Activated T-helper 1 cell treated with anti-CD3 and anti-CD28 coated beads, Interleukin-12 subunit alpha, Interleukin-12 subunit beta, Interleukin-2, Interleukin-4 antibody, amounts not matched to agents 30 ng/mL and 10 ng/mL and 1 ng/mL, durations not matched to agents 14 hours and 24 hours and 36 hours (primary cell): ENCODE measurements at regions of chr15 and their contacts with region 1.

Region 1: GRCh38 chr15:74460871-74461846 is at the start of gene UBL7:
- DNase-seq: peak; percentile 96
- H3K4me3 Mint-ChIP-seq: peak within 1 kb of the TSS; percentile 97
- H3K27ac Mint-ChIP-seq: peak within 1 kb of the TSS; percentile 94
- H3K4me1 Mint-ChIP-seq: peaks cover 56% of the 10 kb centered on the region
- H3K27me3 Mint-ChIP-seq: no peaks in the 10 kb centered on the region
- total RNA-seq, gene UBL7: 55.4 and 56.0 TPM in 2 replicates

Region 2: GRCh38 chr15:73991726-73992593 is 469.2 kb before region 1 on chr15 and contains the start of gene STOML1:
- intact Hi-C with region 1: loop called (anchors 2 kb)
- DNase-seq: peak; percentile 96
- H3K4me3 Mint-ChIP-seq: peak within 1 kb of the TSS; percentile 89
- H3K27ac Mint-ChIP-seq: peak within 1 kb of the TSS; percentile 85
- H3K4me1 Mint-ChIP-seq: peaks cover 49% of the 10 kb centered on the region
- H3K27me3 Mint-ChIP-seq: no peaks in the 10 kb centered on the region
- total RNA-seq, gene STOML1: 10.6 and 11.6 TPM in 2 replicates

Region 3: DNA sequence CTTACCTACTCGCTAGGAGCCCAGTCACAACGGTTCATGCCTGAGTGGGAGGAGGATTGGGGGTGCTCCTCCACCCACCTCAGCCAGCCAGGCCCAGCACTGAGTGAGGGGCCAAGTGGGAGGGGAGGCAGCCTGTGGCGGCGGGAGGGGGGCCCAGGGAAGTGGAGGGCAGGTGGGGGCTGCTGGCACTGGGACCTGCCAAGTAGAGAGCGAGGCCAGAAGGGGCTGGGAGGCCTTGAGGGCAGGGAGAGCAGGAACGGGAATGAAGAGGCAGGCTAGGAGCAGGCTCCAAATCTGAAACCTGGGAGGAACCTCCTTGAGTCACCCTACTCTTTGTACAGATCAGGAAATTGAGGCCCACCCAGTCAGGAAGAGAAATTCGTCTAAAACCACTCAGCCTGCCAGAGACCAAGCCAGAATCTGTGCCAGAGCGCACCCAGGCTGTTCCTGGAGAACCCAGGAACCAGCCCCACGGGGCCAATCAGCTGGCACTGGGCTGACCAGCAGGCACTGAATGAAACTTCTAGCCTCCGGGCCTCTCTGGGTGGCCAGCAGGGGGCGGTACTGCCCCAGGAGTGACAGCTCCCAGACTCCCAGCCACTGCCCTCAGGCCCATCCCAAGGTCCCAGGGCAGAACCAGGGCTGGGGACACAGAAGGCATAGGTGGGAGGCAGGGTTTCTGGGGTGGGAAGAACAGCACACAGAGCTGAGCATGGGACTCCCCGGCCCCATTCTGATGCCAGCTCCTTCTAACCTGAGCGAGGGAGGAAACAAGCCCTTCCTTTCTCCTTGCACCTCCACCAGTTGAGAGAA is 78.9 kb before region 1 on chr15:
- intact Hi-C with region 1: loop called (anchors 1 kb)
- DNase-seq: peak; percentile 70
- H3K4me3 Mint-ChIP-seq: no peak overlapping the region
- H3K27ac Mint-ChIP-seq: peak overlapping the region; percentile 76
- H3K4me1 Mint-ChIP-seq: peaks cover 77% of the 10 kb centered on the region
- H3K27me3 Mint-ChIP-seq: no peaks in the 10 kb centered on the region

Region 4: DNA sequence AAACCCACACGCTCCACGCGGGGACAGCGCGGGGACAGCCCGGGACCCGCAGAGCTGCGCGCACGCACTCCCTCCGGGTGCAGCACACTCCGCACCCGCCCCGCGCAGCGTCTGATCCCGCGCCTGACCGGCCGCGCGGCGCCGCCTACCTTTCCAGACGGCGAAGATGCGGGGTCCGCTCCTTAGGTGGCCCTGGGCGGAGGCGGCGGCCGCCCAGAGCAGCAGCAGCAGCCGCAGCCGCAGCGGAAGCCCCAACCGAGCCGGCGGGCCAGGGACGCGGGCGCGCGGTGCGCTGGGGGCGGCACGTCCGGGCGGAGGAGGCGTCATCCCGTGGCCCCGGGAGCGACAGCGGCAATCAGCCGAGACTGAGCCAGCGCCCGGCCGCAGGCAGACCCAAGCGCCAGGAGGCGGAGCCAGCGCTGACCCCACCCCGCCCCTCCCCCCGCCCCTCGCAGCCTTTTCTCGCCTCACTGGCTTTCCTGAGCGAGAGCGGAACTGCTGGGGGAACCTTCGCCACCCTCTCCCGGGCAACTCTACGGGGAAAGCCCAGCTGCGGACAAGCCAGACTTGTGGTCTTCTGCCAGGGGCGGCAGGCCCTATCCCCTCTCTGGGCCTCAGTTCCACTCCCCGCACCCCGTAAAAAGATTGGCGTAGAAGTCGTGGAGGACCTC is 27.4 kb before region 1 on chr15 and contains the start of gene SEMA7A:
- intact Hi-C with region 1: loop called (anchors 1 kb)
- DNase-seq: peak; percentile 82
- H3K4me3 Mint-ChIP-seq: peak within 1 kb of the TSS; percentile 97
- H3K27ac Mint-ChIP-seq: peak within 1 kb of the TSS; percentile 87
- H3K4me1 Mint-ChIP-seq: peaks cover 79% of the 10 kb centered on the region
- H3K27me3 Mint-ChIP-seq: no peaks in the 10 kb centered on the region
- total RNA-seq, gene SEMA7A: 102 TPM in 2 replicates

Region 5: GRCh38 chr15:74489518-74490338 is 28.6 kb after region 1 on chr15:
- intact Hi-C with region 1: loop called (anchors 1 kb)
- DNase-seq: peak; percentile 63
- H3K4me3 Mint-ChIP-seq: no peak overlapping the region
- H3K27ac Mint-ChIP-seq: peak overlapping the region; percentile 64
- H3K4me1 Mint-ChIP-seq: peaks cover 13% of the 10 kb centered on the region
- H3K27me3 Mint-ChIP-seq: no peaks in the 10 kb centered on the region

Region 6: DNA sequence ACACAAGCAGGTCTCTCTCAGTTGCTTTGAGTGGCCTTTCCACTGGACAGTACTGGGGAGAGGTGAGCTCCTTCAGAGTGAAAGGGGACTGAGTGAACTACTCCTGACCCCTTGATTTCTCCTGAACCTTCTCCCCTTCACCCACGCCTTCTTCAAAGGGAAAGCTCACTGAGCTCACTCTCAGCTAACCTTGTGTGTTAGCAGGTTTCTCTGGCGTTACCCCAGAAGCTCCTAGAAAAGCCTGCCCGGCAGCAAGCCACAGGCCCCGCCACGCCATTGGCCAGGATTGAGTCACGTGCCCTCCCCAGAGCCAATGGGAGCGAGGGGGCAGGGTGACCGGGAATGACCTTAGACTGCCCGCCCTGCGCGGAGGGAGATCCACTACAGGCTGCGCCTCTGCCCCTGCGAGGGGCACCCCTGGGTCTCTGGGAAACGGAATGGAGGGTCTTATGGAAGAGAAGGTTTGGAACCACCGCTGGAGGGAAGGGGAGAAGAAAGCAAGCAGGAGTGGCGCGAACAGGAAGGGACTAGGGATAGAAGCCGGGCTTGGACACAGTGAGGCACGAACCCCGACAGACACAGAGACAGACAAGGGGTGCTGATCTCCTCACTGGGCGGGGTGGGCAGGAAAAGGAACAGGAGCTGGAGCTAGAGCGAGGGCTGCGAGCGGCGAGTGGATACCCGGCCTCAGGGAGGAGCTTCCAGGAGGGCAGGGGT is 137.1 kb after region 1 on chr15:
- intact Hi-C with region 1: loop called (anchors 2 kb)
- DNase-seq: peak; percentile 87
- H3K4me3 Mint-ChIP-seq: peak overlapping the region; percentile 100
- H3K27ac Mint-ChIP-seq: peak overlapping the region; percentile 100
- H3K4me1 Mint-ChIP-seq: peaks cover 19% of the 10 kb centered on the region
- H3K27me3 Mint-ChIP-seq: no peaks in the 10 kb centered on the region

Region 7: GRCh38 chr15:74695597-74696397 is 234.6 kb after region 1 on chr15 and contains the start of gene EDC3:
- intact Hi-C with region 1: loop called (anchors 1 kb)
- DNase-seq: peak; percentile 80
- H3K4me3 Mint-ChIP-seq: peak within 1 kb of the TSS; percentile 100
- H3K27ac Mint-ChIP-seq: peak within 1 kb of the TSS; percentile 100
- H3K4me1 Mint-ChIP-seq: peaks cover 40% of the 10 kb centered on the region
- H3K27me3 Mint-ChIP-seq: peaks cover 2% of the 10 kb centered on the region
- total RNA-seq, gene EDC3: 58.4 and 61.4 TPM in 2 replicates